CD4-positive, alpha-beta T cell (primary cell): ENCODE measurements at regions of chr9 and their contacts with region 1.

Region 1: GRCh38 chr9:76403352-76403751 is 9.1 kb upstream of the RFK start:
- DNase-seq: peak in 4 of 14 experiments; percentile 30 to 81 (median 76)
- ATAC-seq: peak; percentile 97
- H3K4me3 ChIP-seq: peak overlapping the region; percentile 2
- H3K4me3 Mint-ChIP-seq: peak overlapping the region; percentile 3
- H3K27ac ChIP-seq: peak overlapping the region in 1 of 2 donors; percentile 4
- H3K27ac Mint-ChIP-seq: peak overlapping the region; percentile 68
- H3K4me1 ChIP-seq: no peaks in the 10 kb centered on the region
- H3K4me1 Mint-ChIP-seq: peaks cover 9% of the 10 kb centered on the region
- H3K27me3 ChIP-seq: no peaks in the 10 kb centered on the region
- H3K27me3 Mint-ChIP-seq: no peaks in the 10 kb centered on the region
- CTCF ChIP-seq: peak; percentile 64

Region 2: DNA sequence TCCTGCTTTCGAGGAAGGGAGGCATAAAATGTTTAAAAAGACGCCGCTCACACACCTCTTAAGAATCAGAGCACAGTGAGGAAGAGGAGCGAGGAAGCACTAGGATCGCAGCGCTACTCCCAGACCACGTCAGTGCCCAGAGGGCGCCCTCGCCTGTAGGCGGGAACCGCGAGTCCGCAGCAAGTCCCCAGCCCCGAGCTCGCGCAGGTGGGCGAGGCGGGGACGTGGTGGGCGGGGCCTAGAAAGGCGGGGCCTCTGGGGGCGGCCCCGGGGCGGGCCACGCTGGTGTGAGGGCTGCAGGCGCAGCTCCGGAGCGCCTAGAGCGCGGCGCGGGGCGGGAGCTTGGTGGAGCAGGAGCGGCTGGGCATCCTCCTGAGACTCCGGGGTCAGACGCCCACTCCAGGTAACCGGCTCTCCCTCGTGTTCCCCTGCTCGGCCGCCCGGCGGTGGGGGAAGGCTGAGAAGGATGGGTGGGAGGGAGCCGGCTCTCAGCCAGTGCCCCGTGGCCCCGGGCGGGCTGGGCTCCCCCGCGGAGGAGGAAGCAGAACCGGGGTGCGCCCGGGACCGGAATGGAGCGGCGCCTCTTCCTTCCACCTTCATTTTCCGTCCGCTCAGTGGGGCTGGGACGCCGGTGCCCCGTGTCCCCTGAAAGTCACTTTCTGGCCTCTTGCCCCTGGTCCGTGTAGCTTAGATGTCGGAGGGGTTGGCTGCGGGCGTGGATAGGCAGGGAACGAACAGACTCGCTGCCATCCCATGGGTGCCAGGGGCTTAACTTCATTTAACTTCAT is 55.7 kb after region 1 on chr9 and contains the start of gene GCNT1:
- CTCF ChIA-PET with region 1: interaction called, 3 read pairs
- POLR2A ChIA-PET with region 1: no interaction called
- intact Hi-C with region 1: loop called in 1 of 2 experiments (anchors 5 kb)
- DNase-seq: peak; percentile 67 to 94 (median 86)
- ATAC-seq: peak; percentile 93
- H3K4me3 ChIP-seq: peak within 1 kb of the TSS; percentile 75
- H3K4me3 Mint-ChIP-seq: peak within 1 kb of the TSS; percentile 92
- H3K27ac ChIP-seq: no peak within 1 kb of the TSS
- H3K27ac Mint-ChIP-seq: peak within 1 kb of the TSS; percentile 1
- H3K4me1 ChIP-seq: peaks cover 25% of the 10 kb centered on the region
- H3K4me1 Mint-ChIP-seq: peaks cover 25% of the 10 kb centered on the region
- H3K27me3 ChIP-seq: no peaks in the 10 kb centered on the region
- H3K27me3 Mint-ChIP-seq: no peaks in the 10 kb centered on the region
- CTCF ChIP-seq: peak; percentile 43
- total RNA-seq, gene GCNT1: 0.36 to 0.53 TPM

Region 3: GRCh38 chr9:76704593-76705204 is 301.3 kb after region 1 on chr9:
- CTCF ChIA-PET with region 1: interaction called, 3 read pairs
- POLR2A ChIA-PET with region 1: no interaction called
- intact Hi-C with region 1: loop called (anchors 1 to 5 kb)
- DNase-seq: peak in 4 of 14 experiments; percentile 12 to 77 (median 66)
- ATAC-seq: no peak
- H3K4me3 ChIP-seq: no peak overlapping the region
- H3K4me3 Mint-ChIP-seq: no peak overlapping the region
- H3K27ac ChIP-seq: no peak overlapping the region
- H3K27ac Mint-ChIP-seq: no peak overlapping the region
- H3K4me1 ChIP-seq: peaks cover 3% of the 10 kb centered on the region
- H3K4me1 Mint-ChIP-seq: peaks cover 5% of the 10 kb centered on the region
- H3K27me3 ChIP-seq: peaks cover 5 to 9% of the 10 kb centered on the region in 2 experiments
- H3K27me3 Mint-ChIP-seq: peaks cover 48% of the 10 kb centered on the region
- CTCF ChIP-seq: peak; percentile 72

Region 4: DNA sequence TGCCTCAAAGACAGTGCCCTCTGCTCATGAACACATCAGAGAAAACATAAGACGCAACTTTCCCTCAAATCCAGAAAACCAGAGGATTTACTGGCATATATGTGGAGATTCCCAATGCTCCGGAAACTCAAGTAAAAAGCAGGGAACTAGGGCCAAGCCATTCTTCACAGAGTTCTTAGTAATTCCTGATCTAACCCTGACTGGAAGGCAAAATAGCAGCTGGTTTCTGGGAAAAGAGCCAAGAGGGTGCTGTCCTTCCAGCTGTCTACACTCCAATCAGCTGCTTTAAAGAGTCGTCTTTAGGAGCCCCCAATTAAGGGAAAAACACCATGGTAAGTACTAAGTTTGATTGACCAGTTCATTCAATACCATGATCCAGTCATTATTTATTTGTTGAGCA is 1195.2 kb after region 1 on chr9:
- CTCF ChIA-PET with region 1: no interaction called
- POLR2A ChIA-PET with region 1: no interaction called
- intact Hi-C with region 1: no loop called
- DNase-seq: no peak
- ATAC-seq: no peak
- H3K4me3 ChIP-seq: no peak overlapping the region
- H3K4me3 Mint-ChIP-seq: no peak overlapping the region
- H3K27ac ChIP-seq: no peak overlapping the region
- H3K27ac Mint-ChIP-seq: no peak overlapping the region
- H3K4me1 ChIP-seq: no peaks in the 10 kb centered on the region
- H3K4me1 Mint-ChIP-seq: peaks cover 25% of the 10 kb centered on the region
- H3K27me3 ChIP-seq: no peaks in the 10 kb centered on the region
- H3K27me3 Mint-ChIP-seq: no peaks in the 10 kb centered on the region
- CTCF ChIP-seq: no peak